OCI-LY7 (cell line): ENCODE measurements at regions of chr1 and their contacts with region 1.

Region 1: GRCh38 chr1:169546087-169546995 is 39.9 kb downstream of the F5 start:
- DNase-seq: peak; percentile 71
- H3K4me3 ChIP-seq: no peak overlapping the region
- H3K27ac ChIP-seq: no peak overlapping the region
- H3K4me1 ChIP-seq: no peaks in the 10 kb centered on the region
- CTCF ChIP-seq: peak; percentile 84

Region 2: GRCh38 chr1:168603501-168604110 is 942.7 kb before region 1 on chr1:
- CTCF ChIA-PET with region 1: no interaction called
- POLR2A ChIA-PET with region 1: no interaction called
- intact Hi-C with region 1: loop called (anchors 5 kb)
- DNase-seq: peak; percentile 60
- H3K4me3 ChIP-seq: no peak overlapping the region
- H3K27ac ChIP-seq: no peak overlapping the region
- H3K4me1 ChIP-seq: no peaks in the 10 kb centered on the region
- CTCF ChIP-seq: peak; percentile 85

Region 3: DNA sequence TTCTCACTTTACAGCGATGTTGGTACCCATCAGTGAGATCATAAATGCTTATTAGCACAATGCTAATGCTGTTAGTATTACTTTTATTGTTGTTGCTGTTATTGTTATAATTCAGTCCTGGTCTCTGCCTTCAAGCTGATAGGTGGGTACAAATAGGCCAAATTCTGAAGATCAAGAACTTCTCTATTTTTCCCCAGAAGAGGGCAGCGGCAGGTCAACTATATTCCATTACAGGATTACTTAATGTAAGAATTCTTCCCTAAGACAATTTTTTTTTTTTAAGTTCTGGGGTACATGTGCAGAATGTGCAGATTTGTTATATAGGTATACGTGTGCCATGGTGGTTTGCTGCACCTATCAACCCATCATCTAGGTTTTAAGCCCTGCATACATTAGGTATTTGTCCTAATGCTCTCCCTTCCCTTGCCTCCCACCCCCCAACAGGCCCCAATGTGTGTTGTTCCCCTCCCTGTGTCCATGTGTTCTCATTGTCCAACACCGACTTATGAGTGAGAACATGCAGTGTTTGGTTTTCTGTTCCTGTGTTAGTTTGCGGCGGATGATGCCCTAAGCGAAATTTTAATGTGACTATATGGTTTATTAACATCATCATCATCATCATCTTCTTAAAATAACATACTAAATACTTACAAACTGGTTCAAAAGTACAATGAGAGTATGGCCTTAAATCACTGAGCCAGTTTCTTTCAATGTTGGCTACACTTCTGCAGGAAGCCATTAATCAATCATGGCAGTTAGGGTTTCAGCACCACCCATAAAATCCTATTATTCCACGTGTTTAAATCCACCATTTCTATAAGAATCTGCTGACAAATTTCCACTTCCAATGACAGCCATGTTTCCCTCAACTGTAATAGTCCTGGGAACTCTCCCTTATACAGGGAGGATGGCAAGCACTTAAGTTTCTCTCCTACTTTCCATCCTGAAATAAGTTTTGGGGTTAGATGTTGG is 79.8 kb before region 1 on chr1:
- CTCF ChIA-PET with region 1: no interaction called
- POLR2A ChIA-PET with region 1: no interaction called
- intact Hi-C with region 1: loop called (anchors 2 kb)
- DNase-seq: peak; percentile 21
- H3K4me3 ChIP-seq: no peak overlapping the region
- H3K27ac ChIP-seq: no peak overlapping the region
- H3K4me1 ChIP-seq: no peaks in the 10 kb centered on the region
- CTCF ChIP-seq: peak; percentile 62

Region 4: GRCh38 chr1:169809370-169810095 is 263.2 kb after region 1 on chr1:
- CTCF ChIA-PET with region 1: no interaction called
- POLR2A ChIA-PET with region 1: no interaction called
- intact Hi-C with region 1: loop called (anchors 5 kb)
- DNase-seq: peak; percentile 52
- H3K4me3 ChIP-seq: no peak overlapping the region
- H3K27ac ChIP-seq: no peak overlapping the region
- H3K4me1 ChIP-seq: no peaks in the 10 kb centered on the region
- CTCF ChIP-seq: peak; percentile 89